OCI-LY7 (cell line): ENCODE measurements at regions of chr2 and their contacts with region 1.

Region 1: DNA sequence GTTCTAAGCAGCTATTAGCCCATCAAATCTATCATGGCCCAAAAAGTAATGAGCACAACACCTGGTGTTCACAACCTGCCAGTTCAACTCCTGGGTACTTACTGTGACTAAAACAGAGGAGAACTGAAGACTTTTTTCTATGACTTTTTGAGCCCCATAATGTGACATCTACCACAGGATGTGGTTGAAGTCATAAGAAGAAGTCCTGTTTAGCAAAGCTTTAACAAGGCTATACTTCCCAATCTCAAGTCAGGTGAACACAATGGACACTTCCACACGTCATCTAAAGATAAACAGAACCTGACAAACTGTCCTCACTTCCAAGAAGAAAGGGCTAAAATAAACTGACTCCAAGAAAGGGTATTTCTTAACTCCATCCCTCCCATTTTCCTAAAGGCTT is 138.8 kb downstream of the ATAD2B start:
- DNase-seq: peak; percentile 49
- H3K4me3 ChIP-seq: no peak overlapping the region
- H3K27ac ChIP-seq: no peak overlapping the region
- H3K4me1 ChIP-seq: peaks cover 8% of the 10 kb centered on the region
- CTCF ChIP-seq: no peak

Region 2: DNA sequence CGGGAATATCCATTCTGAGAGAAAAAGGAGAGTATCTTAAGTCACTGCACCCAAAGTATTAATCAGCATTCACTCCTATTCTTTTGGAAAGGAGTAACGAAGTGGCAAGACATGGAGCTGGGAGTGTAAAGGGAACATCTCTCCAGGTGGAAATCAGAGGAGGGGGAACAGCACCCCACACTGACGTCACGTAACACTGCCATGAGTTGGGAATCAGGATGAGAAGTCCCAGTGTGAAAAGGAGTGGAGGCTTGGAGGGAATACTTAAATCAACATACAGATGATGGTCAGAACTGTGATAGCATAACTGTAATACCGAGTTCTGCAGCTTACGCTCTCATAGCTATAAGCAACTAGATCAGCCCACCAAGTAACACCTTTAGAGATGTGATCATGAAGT is 1319.9 kb before region 1 on chr2:
- CTCF ChIA-PET with region 1: no interaction called
- POLR2A ChIA-PET with region 1: no interaction called
- intact Hi-C with region 1: no loop called
- DNase-seq: no peak
- H3K4me3 ChIP-seq: no peak overlapping the region
- H3K27ac ChIP-seq: no peak overlapping the region
- H3K4me1 ChIP-seq: no peaks in the 10 kb centered on the region
- CTCF ChIP-seq: no peak

Region 3: GRCh38 chr2:23803965-23804542 is 16.0 kb after region 1 on chr2:
- CTCF ChIA-PET with region 1: no interaction called
- POLR2A ChIA-PET with region 1: interaction called, 10 read pairs
- intact Hi-C with region 1: no loop called
- DNase-seq: peak; percentile 31
- H3K4me3 ChIP-seq: no peak overlapping the region
- H3K27ac ChIP-seq: no peak overlapping the region
- H3K4me1 ChIP-seq: no peaks in the 10 kb centered on the region
- CTCF ChIP-seq: peak; percentile 75